K562 (cell line): ENCODE measurements at regions of chr3 and their contacts with region 1.

Region 1: DNA sequence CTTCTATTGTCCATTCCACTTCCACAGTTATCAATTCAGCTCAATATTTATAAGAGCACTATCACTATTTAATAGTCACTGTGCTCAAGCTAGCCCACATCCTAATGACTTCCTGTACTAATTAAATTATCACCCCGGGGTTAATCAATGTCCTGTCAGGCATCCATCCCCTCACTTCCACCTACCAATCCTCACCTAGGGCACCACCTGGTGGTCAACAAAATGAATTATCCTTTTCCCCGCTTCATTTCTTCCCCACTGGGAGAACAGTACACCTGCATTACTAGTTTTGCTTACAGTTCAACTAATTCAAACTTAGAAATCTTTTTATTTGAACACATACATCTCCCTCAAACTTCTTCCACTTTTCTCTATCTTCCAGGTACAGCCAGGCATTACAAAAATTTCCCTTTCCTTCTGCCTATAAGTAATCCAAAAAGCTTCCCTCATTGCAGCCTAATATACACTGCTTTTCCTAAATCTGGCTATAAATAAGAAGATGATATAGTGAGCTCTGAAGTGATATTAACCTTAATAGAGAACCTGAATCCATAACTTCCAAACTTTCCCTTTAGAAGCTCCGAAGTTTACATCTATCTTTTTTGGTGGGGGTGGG is 68.5 kb downstream of the TMCC1 start:
- DNase-seq: peak; percentile 43 to 64 (median 56)
- ATAC-seq: peak; percentile 70; the same call in 1 of the 3 replicates
- H3K4me3 ChIP-seq: no peak overlapping the region
- H3K27ac ChIP-seq: no peak overlapping the region
- H3K4me1 ChIP-seq: peaks cover 0 to 8% of the 10 kb centered on the region in 2 experiments; a peak in 2 of 5 replicates
- H3K27me3 ChIP-seq: no peaks in the 10 kb centered on the region
- CTCF ChIP-seq: peak; percentile 60 to 69 (median 62)
- EP300 ChIP-seq: no peak
- POLR2A ChIP-seq: no peak
- RAD21 ChIP-seq: peak; percentile 80 to 87

Region 2: GRCh38 chr3:129383292-129383860 is 441.7 kb before region 1 on chr3:
- CTCF ChIA-PET with region 1: interaction called, 3 read pairs
- POLR2A ChIA-PET with region 1: no interaction called
- in situ Hi-C with region 1: loop called (anchors 25 kb)
- intact Hi-C with region 1: loop called (anchors 2 kb)
- DNase-seq: peak; percentile 66 to 76 (median 70)
- ATAC-seq: peak; percentile 96
- H3K4me3 ChIP-seq: no peak overlapping the region
- H3K27ac ChIP-seq: no peak overlapping the region
- H3K4me1 ChIP-seq: peaks cover 0 to 2% of the 10 kb centered on the region in 2 experiments; a peak in 3 of 5 replicates
- H3K27me3 ChIP-seq: no peaks in the 10 kb centered on the region
- CTCF ChIP-seq: peak; percentile 75 to 80 (median 79)
- EP300 ChIP-seq: no peak
- POLR2A ChIP-seq: no peak
- RAD21 ChIP-seq: peak; percentile 64 to 80; a peak in 3 of 4 replicates

Region 3: GRCh38 chr3:129481766-129482332 is 343.2 kb before region 1 on chr3:
- CTCF ChIA-PET with region 1: no interaction called
- POLR2A ChIA-PET with region 1: no interaction called
- in situ Hi-C with region 1: loop called (anchors 5 kb)
- intact Hi-C with region 1: no loop called
- DNase-seq: peak; percentile 22 to 46 (median 24)
- ATAC-seq: peak; percentile 78
- H3K4me3 ChIP-seq: no peak overlapping the region
- H3K27ac ChIP-seq: no peak overlapping the region; the same call in 2 of the 3 replicates
- H3K4me1 ChIP-seq: peaks cover 14 to 21% of the 10 kb centered on the region in 2 experiments; a peak in 4 of 5 replicates
- H3K27me3 ChIP-seq: no peaks in the 10 kb centered on the region
- CTCF ChIP-seq: no peak
- EP300 ChIP-seq: no peak
- POLR2A ChIP-seq: no peak
- RAD21 ChIP-seq: no peak

Region 4: GRCh38 chr3:129627429-129628168 is 197.4 kb before region 1 on chr3:
- CTCF ChIA-PET with region 1: interaction called, 9 read pairs
- POLR2A ChIA-PET with region 1: no interaction called
- in situ Hi-C with region 1: no loop called
- intact Hi-C with region 1: loop called (anchors 1 kb)
- DNase-seq: no peak
- ATAC-seq: no peak
- H3K4me3 ChIP-seq: peak overlapping the region; percentile 45; the same call in 1 of the 2 replicates
- H3K27ac ChIP-seq: no peak overlapping the region; the same call in 2 of the 3 replicates
- H3K4me1 ChIP-seq: peaks cover 5 to 51% of the 10 kb centered on the region in 2 experiments
- H3K27me3 ChIP-seq: no peaks in the 10 kb centered on the region
- CTCF ChIP-seq: peak; percentile 50 to 57 (median 52); a peak in 5 of 6 replicates
- EP300 ChIP-seq: no peak
- POLR2A ChIP-seq: no peak
- RAD21 ChIP-seq: peak; percentile 15 to 57; a peak in 2 of 4 replicates

Region 5: GRCh38 chr3:129934234-129935123 is 109.4 kb after region 1 on chr3:
- CTCF ChIA-PET with region 1: interaction called, 3 read pairs
- POLR2A ChIA-PET with region 1: no interaction called
- in situ Hi-C with region 1: loop called (anchors 10 kb)
- intact Hi-C with region 1: loop called (anchors 5 kb)
- DNase-seq: peak; percentile 35 to 59 (median 54)
- ATAC-seq: peak; percentile 73
- H3K4me3 ChIP-seq: peak overlapping the region; percentile 9
- H3K27ac ChIP-seq: no peak overlapping the region
- H3K4me1 ChIP-seq: peaks cover 0 to 5% of the 10 kb centered on the region in 2 experiments; a peak in 2 of 5 replicates
- H3K27me3 ChIP-seq: peaks cover 0 to 5% of the 10 kb centered on the region in 2 experiments; a peak in 1 of 5 replicates
- CTCF ChIP-seq: peak; percentile 63 to 84 (median 74)
- EP300 ChIP-seq: no peak
- POLR2A ChIP-seq: no peak
- RAD21 ChIP-seq: peak; percentile 65 to 77